ENCODE measurements at regions of chr6 and their contacts with region 1.

Region 1: GRCh38 chr6:13239530-13240455 is 88.5 kb downstream of the TBC1D7 start:
- DNase-seq: no peak
- CTCF ChIP-seq: no peak

Region 2: GRCh38 chr6:13229205-13230085 is 10.3 kb before region 1 on chr6:
- CTCF ChIA-PET with region 1: interaction called, 11 read pairs
- POLR2A ChIA-PET with region 1: no interaction called
- DNase-seq: peak; percentile 72
- CTCF ChIP-seq: peak; percentile 60

Region 3: GRCh38 chr6:13272131-13273046 is 32.6 kb after region 1 on chr6:
- CTCF ChIA-PET with region 1: no interaction called
- POLR2A ChIA-PET with region 1: no interaction called
- DNase-seq: peak; percentile 69
- CTCF ChIP-seq: peak; percentile 9

Region 4: DNA sequence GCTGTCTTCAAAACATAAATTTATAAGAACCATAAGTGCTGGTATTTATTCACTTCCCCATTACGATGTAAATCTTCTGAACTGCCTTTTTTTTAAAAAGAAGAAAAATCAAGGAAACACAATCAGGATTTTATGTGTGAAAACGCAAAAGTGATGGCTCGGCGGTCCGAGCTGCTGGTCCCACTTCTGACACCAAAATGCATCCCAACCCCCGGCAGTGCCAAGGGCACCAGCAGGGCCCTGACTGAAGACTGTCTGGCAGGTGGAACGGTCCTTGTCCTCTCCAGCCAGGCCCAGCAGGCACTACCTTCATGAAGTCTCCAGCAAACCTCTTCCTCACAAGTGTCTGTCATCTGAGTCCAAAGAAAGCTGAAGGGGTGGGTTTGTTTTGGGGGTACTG is 47.3 kb after region 1 on chr6:
- CTCF ChIA-PET with region 1: no interaction called
- POLR2A ChIA-PET with region 1: interaction called, 10 read pairs
- DNase-seq: no peak
- CTCF ChIP-seq: no peak

Region 5: GRCh38 chr6:13302751-13303667 is 63.2 kb after region 1 on chr6:
- CTCF ChIA-PET with region 1: no interaction called
- POLR2A ChIA-PET with region 1: no interaction called
- DNase-seq: peak; percentile 72
- CTCF ChIP-seq: no peak